ENCODE measurements at regions of chr1 and their contacts with region 1.

Region 1: GRCh38 chr1:61782771-61783170 is 40.5 kb downstream of the PATJ start:
- DNase-seq: peak; percentile 27 to 93 (median 58)
- ATAC-seq: peak; percentile 98
- H3K4me3 ChIP-seq: peak overlapping the region; percentile 13
- H3K4me3 Mint-ChIP-seq: peak overlapping the region; percentile 82
- H3K27ac ChIP-seq: no peak overlapping the region
- H3K27ac Mint-ChIP-seq: peak overlapping the region; percentile 85
- H3K4me1 ChIP-seq: peaks cover 29% of the 10 kb centered on the region
- H3K4me1 Mint-ChIP-seq: peaks cover 64% of the 10 kb centered on the region
- H3K27me3 ChIP-seq: no peaks in the 10 kb centered on the region
- H3K27me3 Mint-ChIP-seq: no peaks in the 10 kb centered on the region
- CTCF ChIP-seq: no peak

Region 2: DNA sequence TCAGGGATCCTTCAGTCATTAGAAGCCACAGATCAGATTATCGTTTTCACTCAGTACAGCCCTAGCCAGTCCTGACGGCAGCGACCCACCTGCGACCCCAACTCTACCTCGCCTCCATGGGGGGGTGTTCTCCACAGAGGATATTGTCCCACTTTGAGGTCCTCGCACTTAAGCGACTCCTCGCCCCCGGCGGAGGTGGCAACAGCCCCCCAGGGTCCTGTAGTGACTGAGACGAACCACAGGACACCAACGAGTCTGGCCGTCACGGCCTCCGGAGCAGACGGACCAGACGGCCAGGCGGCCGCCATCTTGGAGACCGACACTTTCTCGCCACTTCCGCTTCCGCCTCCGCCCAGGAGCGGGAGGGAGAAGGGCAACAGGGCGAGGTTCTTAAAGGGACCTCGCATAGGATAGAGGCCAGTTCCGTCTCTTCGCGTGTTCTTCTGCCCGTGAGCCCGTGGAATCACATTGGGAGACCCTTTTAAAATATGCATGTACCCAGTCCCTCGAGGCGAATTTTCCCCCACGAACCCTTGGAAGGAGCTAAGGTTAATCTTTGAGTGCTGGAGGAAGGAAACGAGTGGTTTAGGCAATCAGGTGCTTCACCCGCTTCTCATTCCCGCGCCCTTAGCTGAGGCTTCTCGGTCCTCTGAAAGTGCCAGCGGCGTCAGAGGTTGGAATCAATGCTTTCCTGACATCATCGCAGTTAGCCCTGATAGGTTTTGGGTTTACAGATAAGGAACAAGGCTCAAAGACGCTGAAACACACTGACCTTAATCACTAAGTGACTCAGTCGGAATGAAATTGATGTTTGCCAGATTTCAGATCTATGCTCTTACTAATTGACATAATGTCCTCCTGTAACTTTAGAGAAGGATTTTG is 57.7 kb before region 1 on chr1 and contains the start of gene TM2D1:
- CTCF ChIA-PET with region 1: no interaction called
- POLR2A ChIA-PET with region 1: interaction called, 8 read pairs
- intact Hi-C with region 1: loop called (anchors 1 to 2 kb)
- DNase-seq: peak; percentile 65 to 92 (median 78)
- ATAC-seq: peak; percentile 91
- H3K4me3 ChIP-seq: peak within 1 kb of the TSS; percentile 93
- H3K4me3 Mint-ChIP-seq: peak within 1 kb of the TSS; percentile 97
- H3K27ac ChIP-seq: peak within 1 kb of the TSS; percentile 87 to 91
- H3K27ac Mint-ChIP-seq: peak within 1 kb of the TSS; percentile 97
- H3K4me1 ChIP-seq: peaks cover 17% of the 10 kb centered on the region
- H3K4me1 Mint-ChIP-seq: peaks cover 40% of the 10 kb centered on the region
- H3K27me3 ChIP-seq: no peaks in the 10 kb centered on the region
- H3K27me3 Mint-ChIP-seq: no peaks in the 10 kb centered on the region
- CTCF ChIP-seq: no peak
- total RNA-seq, gene TM2D1: 12.0 to 13.7 TPM

Region 3: DNA sequence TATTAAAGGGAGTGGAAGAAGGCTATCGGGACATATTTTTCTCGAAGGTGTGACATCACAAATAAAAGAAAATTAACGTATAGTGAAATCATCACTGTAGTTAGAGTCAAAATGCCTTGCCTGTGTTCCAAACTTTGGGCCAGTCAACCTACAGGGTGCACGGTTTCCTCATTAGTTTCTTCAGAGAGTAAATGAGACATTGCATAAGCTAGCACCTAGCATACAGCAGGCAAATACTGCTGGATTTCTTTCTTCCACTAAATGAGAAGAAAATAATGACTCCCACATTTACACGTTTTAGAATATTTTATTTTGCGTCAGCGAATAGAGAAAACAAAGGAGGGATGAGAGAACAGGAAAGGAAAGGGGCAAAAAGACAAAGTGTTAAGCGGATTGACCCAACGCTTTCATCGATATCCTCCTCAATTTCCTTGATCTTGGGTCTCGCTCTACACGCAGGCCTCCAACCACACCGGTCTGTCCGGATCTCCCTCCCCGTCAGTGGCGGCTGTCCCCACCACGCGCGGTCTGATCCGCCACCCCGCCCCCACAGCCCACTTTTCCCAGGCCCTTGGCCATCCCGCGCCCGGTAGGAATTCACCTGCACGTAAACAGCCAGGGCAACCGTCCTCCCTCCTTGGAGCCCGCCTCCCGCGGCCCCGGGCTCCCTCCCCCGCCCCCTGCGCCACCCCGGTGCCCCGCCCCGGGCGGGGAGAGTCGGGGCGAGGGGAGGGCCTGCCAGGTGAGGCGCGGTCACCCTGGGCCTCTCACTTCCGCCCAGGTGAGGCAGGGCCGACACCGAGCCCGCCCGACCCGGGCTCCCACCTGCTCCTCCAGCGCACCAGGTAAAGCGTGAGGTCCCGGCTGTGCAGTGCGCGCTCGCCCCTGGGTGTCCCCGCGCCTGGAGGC is 40.8 kb before region 1 on chr1 and contains the start of gene PATJ:
- CTCF ChIA-PET with region 1: no interaction called
- POLR2A ChIA-PET with region 1: interaction called, 3 read pairs
- intact Hi-C with region 1: loop called (anchors 2 to 5 kb)
- DNase-seq: peak; percentile 40 to 87 (median 66)
- ATAC-seq: peak; percentile 91
- H3K4me3 ChIP-seq: peak within 1 kb of the TSS; percentile 78
- H3K4me3 Mint-ChIP-seq: peak within 1 kb of the TSS; percentile 97
- H3K27ac ChIP-seq: peak within 1 kb of the TSS; percentile 56 to 62
- H3K27ac Mint-ChIP-seq: peak within 1 kb of the TSS; percentile 94
- H3K4me1 ChIP-seq: peaks cover 23% of the 10 kb centered on the region
- H3K4me1 Mint-ChIP-seq: peaks cover 31% of the 10 kb centered on the region
- H3K27me3 ChIP-seq: no peaks in the 10 kb centered on the region
- H3K27me3 Mint-ChIP-seq: no peaks in the 10 kb centered on the region
- CTCF ChIP-seq: no peak
- total RNA-seq, gene PATJ: 50.4 to 54.1 TPM

Region 4: DNA sequence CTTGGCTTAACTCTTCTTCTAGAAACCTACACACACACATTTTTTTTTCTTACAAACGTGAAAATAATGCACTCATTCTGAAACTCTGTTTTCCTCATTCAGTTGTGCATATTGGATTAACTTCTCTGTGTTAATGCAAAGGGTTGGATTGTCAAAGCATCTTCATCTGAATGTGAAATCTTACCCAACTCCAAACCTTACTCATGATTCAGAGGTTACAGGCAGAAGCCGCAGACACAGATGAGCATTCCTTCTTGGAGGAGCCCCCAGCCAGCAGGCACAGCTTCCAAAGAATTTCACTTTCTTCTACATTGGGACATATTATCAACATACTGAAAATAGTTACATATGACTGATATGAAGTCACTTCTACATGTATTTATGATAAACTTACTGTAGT is 24.8 kb before region 1 on chr1:
- CTCF ChIA-PET with region 1: no interaction called
- POLR2A ChIA-PET with region 1: no interaction called
- intact Hi-C with region 1: loop called in 1 of 2 experiments (anchors 2 kb)
- DNase-seq: no peak
- ATAC-seq: no peak
- H3K4me3 ChIP-seq: no peak overlapping the region
- H3K4me3 Mint-ChIP-seq: no peak overlapping the region
- H3K27ac ChIP-seq: no peak overlapping the region
- H3K27ac Mint-ChIP-seq: no peak overlapping the region
- H3K4me1 ChIP-seq: no peaks in the 10 kb centered on the region
- H3K4me1 Mint-ChIP-seq: peaks cover 16% of the 10 kb centered on the region
- H3K27me3 ChIP-seq: no peaks in the 10 kb centered on the region
- H3K27me3 Mint-ChIP-seq: no peaks in the 10 kb centered on the region
- CTCF ChIP-seq: no peak

Region 5: GRCh38 chr1:61851849-61852669 is 69.3 kb after region 1 on chr1:
- CTCF ChIA-PET with region 1: no interaction called
- POLR2A ChIA-PET with region 1: no interaction called
- intact Hi-C with region 1: no loop called
- DNase-seq: peak in 3 of 14 experiments; percentile 69 to 75 (median 75)
- ATAC-seq: peak; percentile 54
- H3K4me3 ChIP-seq: no peak overlapping the region
- H3K4me3 Mint-ChIP-seq: no peak overlapping the region
- H3K27ac ChIP-seq: no peak overlapping the region
- H3K27ac Mint-ChIP-seq: no peak overlapping the region
- H3K4me1 ChIP-seq: no peaks in the 10 kb centered on the region
- H3K4me1 Mint-ChIP-seq: no peaks in the 10 kb centered on the region
- H3K27me3 ChIP-seq: no peaks in the 10 kb centered on the region
- H3K27me3 Mint-ChIP-seq: no peaks in the 10 kb centered on the region
- CTCF ChIP-seq: peak; percentile 92

Region 6: DNA sequence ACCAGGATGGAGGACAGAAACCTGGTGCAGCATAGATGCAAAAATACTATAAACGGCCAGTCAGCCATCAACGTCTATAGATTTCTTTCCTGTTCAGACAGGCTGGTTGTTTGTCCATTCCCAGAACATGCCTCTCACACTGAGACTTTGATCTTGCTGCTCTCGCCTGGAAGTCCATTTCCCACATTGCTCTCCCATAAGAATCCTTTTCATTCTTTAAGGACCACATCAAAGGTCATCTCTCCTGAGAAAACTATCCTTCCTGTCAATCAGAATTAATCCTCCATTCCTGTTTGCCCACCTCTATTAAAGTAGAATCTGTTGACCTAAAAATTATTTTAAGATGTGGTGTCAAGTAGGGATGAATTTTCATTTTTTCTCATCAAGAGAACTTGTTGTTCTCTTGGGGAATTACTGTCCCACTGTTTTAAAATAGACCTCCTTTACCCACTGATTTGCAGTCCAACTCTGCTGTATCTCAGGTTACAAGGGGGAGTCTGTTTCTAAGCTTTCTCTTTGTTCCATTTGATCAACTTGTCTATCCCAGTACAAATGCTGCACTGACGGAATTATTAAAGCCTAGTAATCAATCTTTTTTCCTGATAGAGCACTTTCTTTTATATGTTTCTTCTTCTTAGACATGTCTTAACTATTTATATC is 132.2 kb after region 1 on chr1:
- CTCF ChIA-PET with region 1: no interaction called
- POLR2A ChIA-PET with region 1: no interaction called
- intact Hi-C with region 1: no loop called
- DNase-seq: no peak
- ATAC-seq: no peak
- H3K4me3 ChIP-seq: no peak overlapping the region
- H3K4me3 Mint-ChIP-seq: no peak overlapping the region
- H3K27ac ChIP-seq: no peak overlapping the region
- H3K27ac Mint-ChIP-seq: no peak overlapping the region
- H3K4me1 ChIP-seq: no peaks in the 10 kb centered on the region
- H3K4me1 Mint-ChIP-seq: no peaks in the 10 kb centered on the region
- H3K27me3 ChIP-seq: no peaks in the 10 kb centered on the region
- H3K27me3 Mint-ChIP-seq: no peaks in the 10 kb centered on the region
- CTCF ChIP-seq: no peak

Measured in CD4-positive, alpha-beta T cell (primary cell).